ENCODE measurements at regions of chr12 and their contacts with region 1.

Region 1: DNA sequence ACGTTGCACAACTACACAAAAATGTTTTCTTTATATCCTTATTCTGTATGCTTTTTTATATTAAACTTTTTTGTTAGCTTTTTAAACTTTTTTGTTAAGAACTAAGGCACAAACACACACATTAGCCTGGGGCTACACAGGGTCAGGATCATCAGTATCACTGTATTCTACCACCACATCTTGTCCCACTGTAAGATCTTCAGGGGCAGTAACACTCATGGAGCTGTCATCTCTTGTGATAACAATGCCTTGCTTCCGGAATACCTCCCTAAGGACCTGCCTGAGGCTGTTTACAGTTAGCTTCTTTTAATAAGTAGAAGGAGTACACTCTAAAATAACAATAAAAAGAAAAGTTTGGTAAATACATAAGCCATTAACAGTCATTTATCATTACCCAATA is 42.2 kb downstream of the PLEKHA5 start:
- DNase-seq: no peak
- ATAC-seq: no peak
- H3K4me3 ChIP-seq: no peak overlapping the region
- H3K27ac ChIP-seq: peak overlapping the region in 1 of 10 donors; percentile 4
- H3K4me1 ChIP-seq: peaks cover 0 to 53% (median 26%) of the 10 kb centered on the region in 9 donors
- H3K27me3 ChIP-seq: no peaks in the 10 kb centered on the region
- CTCF ChIP-seq: no peak

Region 2: GRCh38 chr12:18888047-18888446 is 283.7 kb before region 1 on chr12:
- intact Hi-C with region 1: no loop called
- DNase-seq: no peak
- ATAC-seq: peak in 6 of 8 donors; percentile 63 to 86 (median 77)
- H3K4me3 ChIP-seq: no peak overlapping the region
- H3K27ac ChIP-seq: peak overlapping the region in 1 of 10 donors; percentile 31
- H3K4me1 ChIP-seq: no peaks in the 10 kb centered on the region
- H3K27me3 ChIP-seq: no peaks in the 10 kb centered on the region
- CTCF ChIP-seq: no peak

Region 3: GRCh38 chr12:19138551-19138950 is 33.2 kb before region 1 on chr12:
- intact Hi-C with region 1: loop called in 3 of 10 experiments (anchors 2 to 5 kb)
- DNase-seq: no peak
- ATAC-seq: peak in 1 of 8 donors; percentile 36
- H3K4me3 ChIP-seq: no peak overlapping the region
- H3K27ac ChIP-seq: no peak overlapping the region
- H3K4me1 ChIP-seq: peaks cover 0 to 48% (median 31%) of the 10 kb centered on the region in 9 donors
- H3K27me3 ChIP-seq: no peaks in the 10 kb centered on the region
- CTCF ChIP-seq: no peak